ENCODE measurements at regions of chrX and their contacts with region 1.

Region 1: DNA sequence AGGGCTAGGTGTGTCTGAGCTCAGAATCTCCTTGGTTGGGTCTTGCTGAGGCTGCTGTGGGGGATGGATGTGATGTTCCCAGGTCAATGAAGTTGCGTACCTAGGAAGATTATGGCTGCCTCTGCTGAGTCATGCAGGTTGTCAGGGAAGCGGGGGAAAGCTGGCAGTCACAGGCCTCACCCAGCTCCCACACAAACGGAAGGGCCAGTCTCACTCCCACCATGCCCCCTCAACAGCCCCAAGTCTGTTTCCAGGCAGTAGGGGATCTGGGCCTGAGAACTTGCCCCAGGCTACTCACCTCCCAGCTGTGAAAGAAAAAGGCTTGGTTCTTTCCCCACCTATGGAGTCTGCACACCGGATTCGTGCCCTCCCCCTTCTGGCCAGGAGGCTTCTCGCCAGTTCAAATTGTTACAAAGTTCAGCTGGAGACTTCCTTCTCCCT is 72.9 kb downstream of the WDR44 start:
- DNase-seq: no peak
- ATAC-seq: no peak
- H3K4me3 ChIP-seq: no peak overlapping the region
- H3K27ac ChIP-seq: no peak overlapping the region
- H3K4me1 ChIP-seq: no peaks in the 10 kb centered on the region
- H3K27me3 ChIP-seq: no peaks in the 10 kb centered on the region
- CTCF ChIP-seq: no peak
- POLR2A ChIP-seq: no peak
- RAD21 ChIP-seq: no peak

Region 2: DNA sequence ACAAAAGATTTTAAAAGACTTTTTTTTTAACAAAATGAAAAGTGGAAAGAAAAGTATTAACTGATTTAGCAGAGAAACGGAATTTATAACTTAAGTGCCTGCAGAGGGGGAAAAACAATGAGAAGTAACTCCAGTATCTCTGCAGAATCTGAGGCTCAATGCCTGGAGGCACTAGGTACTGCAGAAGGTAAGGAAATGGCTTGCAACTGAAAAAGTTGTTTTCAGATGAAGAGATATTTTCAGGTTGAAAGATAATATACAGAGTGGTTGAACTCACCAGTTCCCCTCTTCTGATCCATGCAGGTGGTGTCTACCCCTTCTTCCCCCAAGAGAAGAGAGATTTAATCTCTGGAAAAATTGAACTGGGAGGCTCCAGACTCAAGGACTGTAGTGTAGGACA is 1052.7 kb before region 1 on chrX:
- CTCF ChIA-PET with region 1: no interaction called
- POLR2A ChIA-PET with region 1: no interaction called
- dilution Hi-C with region 1: no loop called
- in situ Hi-C with region 1: no loop called
- intact Hi-C with region 1: no loop called
- DNase-seq: no peak
- ATAC-seq: no peak
- H3K4me3 ChIP-seq: no peak overlapping the region
- H3K27ac ChIP-seq: no peak overlapping the region
- H3K4me1 ChIP-seq: no peaks in the 10 kb centered on the region
- H3K27me3 ChIP-seq: no peaks in the 10 kb centered on the region
- CTCF ChIP-seq: no peak
- POLR2A ChIP-seq: no peak
- RAD21 ChIP-seq: no peak

Region 3: DNA sequence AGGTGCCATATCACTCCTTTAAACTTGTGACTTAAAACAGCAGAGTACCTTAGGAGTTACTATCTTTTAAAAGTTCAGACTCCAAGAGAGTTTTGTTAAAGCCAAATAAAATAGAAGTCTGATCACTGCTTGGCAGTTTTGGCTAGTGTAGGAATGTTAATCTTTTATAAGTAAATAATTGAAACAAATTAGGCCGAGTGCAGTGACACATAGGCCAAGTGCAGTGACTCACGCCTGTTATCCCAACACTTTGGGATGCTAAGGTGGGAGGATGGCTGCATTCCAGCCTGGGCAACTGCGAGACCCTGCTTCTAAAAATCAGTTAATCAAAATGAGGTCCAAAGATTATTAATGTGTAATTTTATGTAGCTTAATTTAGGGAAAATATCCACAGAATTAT is 35.7 kb before region 1 on chrX:
- CTCF ChIA-PET with region 1: no interaction called
- POLR2A ChIA-PET with region 1: interaction called, 12 read pairs
- dilution Hi-C with region 1: no loop called
- in situ Hi-C with region 1: no loop called
- intact Hi-C with region 1: no loop called
- DNase-seq: no peak
- ATAC-seq: no peak
- H3K4me3 ChIP-seq: no peak overlapping the region
- H3K27ac ChIP-seq: no peak overlapping the region
- H3K4me1 ChIP-seq: no peaks in the 10 kb centered on the region; the same call in 1 of the 2 replicates
- H3K27me3 ChIP-seq: no peaks in the 10 kb centered on the region
- CTCF ChIP-seq: no peak
- POLR2A ChIP-seq: no peak
- RAD21 ChIP-seq: no peak

Region 4: GRCh38 chrX:118566359-118566758 is 147.5 kb after region 1 on chrX:
- CTCF ChIA-PET with region 1: no interaction called
- POLR2A ChIA-PET with region 1: no interaction called
- dilution Hi-C with region 1: no loop called
- in situ Hi-C with region 1: no loop called
- intact Hi-C with region 1: no loop called
- DNase-seq: peak; percentile 15
- ATAC-seq: no peak
- H3K4me3 ChIP-seq: no peak overlapping the region
- H3K27ac ChIP-seq: no peak overlapping the region
- H3K4me1 ChIP-seq: no peaks in the 10 kb centered on the region
- H3K27me3 ChIP-seq: no peaks in the 10 kb centered on the region
- CTCF ChIP-seq: no peak
- POLR2A ChIP-seq: no peak
- RAD21 ChIP-seq: no peak

Measured in IMR-90 (cell line).